Psoas muscle (tissue), 8 donors: ENCODE measurements at regions of chrX and their contacts with region 1.

Region 1: DNA sequence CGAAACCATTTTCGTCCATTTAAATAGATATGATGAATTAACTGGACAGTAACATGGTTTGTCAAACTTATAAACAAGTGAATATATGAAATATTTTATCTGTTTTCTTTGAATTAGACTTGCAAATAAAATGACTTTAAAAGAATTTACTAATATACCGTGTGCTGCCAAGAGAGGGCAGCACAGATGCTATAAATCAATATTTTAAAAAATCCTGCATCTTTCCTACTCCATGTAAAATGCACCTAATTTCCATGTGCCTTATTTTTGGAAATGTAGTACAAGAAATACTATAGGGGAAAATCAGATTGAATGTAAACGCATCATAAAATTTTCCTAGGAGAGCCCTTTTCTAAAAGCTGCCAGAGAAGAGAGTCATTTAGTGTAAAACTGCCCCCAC is 62.2 kb downstream of the PRKX start:
- DNase-seq: no peak
- ATAC-seq: no peak
- H3K4me3 ChIP-seq: no peak overlapping the region
- H3K27ac ChIP-seq: no peak overlapping the region
- H3K4me1 ChIP-seq: no peaks in the 10 kb centered on the region
- H3K27me3 ChIP-seq: no peaks in the 10 kb centered on the region
- CTCF ChIP-seq: peak; percentile 39

Region 2: DNA sequence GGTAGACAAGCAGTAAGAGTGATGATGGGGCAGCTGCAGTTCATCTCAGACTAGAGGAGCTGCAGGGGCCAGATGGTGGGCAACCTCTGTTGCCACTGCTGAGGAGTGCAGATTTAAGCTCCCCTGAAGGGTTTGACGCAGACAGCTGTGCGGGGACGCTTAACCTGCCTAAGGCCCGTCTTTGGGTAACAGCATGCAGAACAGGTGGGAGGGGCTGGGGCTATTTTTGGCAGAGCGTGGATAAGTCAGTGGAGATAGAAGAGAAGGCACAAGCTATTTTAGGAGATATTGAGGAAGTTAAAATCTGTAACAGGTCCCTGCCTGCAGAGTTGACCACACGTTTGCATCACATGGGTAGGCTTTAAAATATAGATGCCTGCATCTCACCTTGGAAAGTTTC is 949.7 kb before region 1 on chrX:
- intact Hi-C with region 1: loop called in 1 of 2 experiments (anchors 5 kb)
- DNase-seq: peak in 1 of 2 donors; percentile 67
- ATAC-seq: peak; percentile 58 to 81 (median 68)
- H3K4me3 ChIP-seq: no peak overlapping the region
- H3K27ac ChIP-seq: peak overlapping the region; percentile 67
- H3K4me1 ChIP-seq: peaks cover 69% of the 10 kb centered on the region
- H3K27me3 ChIP-seq: no peaks in the 10 kb centered on the region
- CTCF ChIP-seq: no peak

Region 3: GRCh38 chrX:3788509-3789233 is 137.4 kb after region 1 on chrX:
- intact Hi-C with region 1: no loop called
- DNase-seq: no peak
- ATAC-seq: no peak
- H3K4me3 ChIP-seq: no peak overlapping the region
- H3K27ac ChIP-seq: no peak overlapping the region
- H3K4me1 ChIP-seq: no peaks in the 10 kb centered on the region
- H3K27me3 ChIP-seq: peaks cover 0 to 20% (median 0%) of the 10 kb centered on the region in 3 donors
- CTCF ChIP-seq: no peak

Region 4: DNA sequence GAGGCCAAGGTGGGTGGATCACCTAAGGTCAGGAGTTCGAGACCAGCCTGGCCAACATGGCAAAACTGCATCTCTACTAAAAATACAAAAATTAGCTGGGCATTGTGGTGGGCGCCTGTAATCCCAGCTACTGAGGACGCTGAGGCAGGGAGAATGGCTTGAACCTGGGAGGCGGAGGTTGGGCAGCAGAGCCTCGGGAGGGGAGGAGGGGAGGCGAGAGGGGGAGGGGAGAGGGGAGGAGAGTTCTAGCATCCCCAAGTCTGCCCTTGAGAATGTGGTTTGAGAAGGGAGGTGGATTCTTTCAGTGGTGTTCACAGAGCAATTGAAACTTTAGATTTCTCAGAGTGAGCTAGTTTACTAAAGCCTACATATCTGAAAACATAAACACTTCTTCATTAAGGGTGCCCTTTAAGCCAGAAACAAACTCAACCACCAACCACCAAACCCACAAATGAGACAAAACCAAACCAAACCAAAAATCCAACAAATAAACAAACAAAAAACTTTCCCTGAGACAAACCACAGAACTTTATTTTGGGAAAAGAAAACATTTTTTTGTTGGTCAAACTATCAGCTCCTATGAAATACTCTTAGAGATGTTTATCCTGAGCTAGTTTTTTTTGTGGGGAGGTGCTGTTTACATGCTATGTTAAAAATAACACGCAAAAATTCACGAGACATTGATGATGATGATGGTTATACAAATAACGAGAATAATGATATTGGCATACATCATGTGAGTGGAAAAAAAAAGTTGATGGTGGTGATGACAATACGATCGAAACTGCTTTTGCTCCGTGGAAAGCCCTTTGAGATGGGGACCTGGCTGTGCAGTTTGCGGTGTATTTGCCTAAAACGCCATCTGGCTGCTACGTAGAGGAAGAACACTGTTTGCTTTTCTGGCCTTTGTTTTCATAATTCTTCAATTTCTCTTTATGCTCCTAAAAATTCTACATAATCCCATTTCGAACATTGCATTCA is 160.3 kb after region 1 on chrX:
- intact Hi-C with region 1: loop called in 1 of 2 experiments (anchors 5 kb)
- DNase-seq: no peak
- ATAC-seq: no peak
- H3K4me3 ChIP-seq: no peak overlapping the region
- H3K27ac ChIP-seq: no peak overlapping the region
- H3K4me1 ChIP-seq: peaks cover 2% of the 10 kb centered on the region
- H3K27me3 ChIP-seq: peaks cover 0 to 26% (median 0%) of the 10 kb centered on the region in 3 donors
- CTCF ChIP-seq: peak; percentile 47

Region 5: DNA sequence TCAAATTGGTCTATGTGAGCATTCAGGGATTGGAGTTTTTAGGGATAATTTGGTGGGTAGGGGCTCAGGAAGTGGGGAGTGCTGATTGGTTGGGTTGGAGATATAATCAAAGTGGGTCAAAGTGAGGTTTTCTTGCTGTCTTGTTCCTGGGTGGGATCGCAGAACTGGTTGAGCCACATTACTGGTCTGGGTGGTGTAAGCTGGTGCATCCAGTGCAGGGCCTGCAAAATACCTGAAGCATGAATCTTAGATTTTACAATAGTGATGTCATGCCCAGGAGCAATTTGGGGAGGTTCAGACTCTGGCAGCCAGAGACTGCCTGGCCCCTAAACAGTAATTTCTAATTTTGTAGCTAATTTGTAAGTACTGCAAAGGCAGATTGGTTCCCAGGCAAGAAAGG is 727.8 kb after region 1 on chrX:
- intact Hi-C with region 1: no loop called
- DNase-seq: no peak
- ATAC-seq: no peak
- H3K4me3 ChIP-seq: no peak overlapping the region
- H3K27ac ChIP-seq: no peak overlapping the region
- H3K4me1 ChIP-seq: no peaks in the 10 kb centered on the region
- H3K27me3 ChIP-seq: no peaks in the 10 kb centered on the region
- CTCF ChIP-seq: no peak